ENCODE measurements at regions of chr14 and their contacts with region 1.

Region 1: GRCh38 chr14:94001501-94002396 is 4.6 kb downstream of the CCDC197 start:
- DNase-seq: peak in 4 of 5 donors; percentile 52 to 61 (median 54)
- H3K4me3 ChIP-seq: no peak overlapping the region
- H3K4me3 Mint-ChIP-seq: peak overlapping the region in 5 of 8 donors; percentile 19 to 66 (median 36)
- H3K27ac ChIP-seq: no peak overlapping the region
- H3K27ac Mint-ChIP-seq: peak overlapping the region in 4 of 7 donors; percentile 8 to 61 (median 44)
- H3K4me1 ChIP-seq: peaks cover 8% of the 10 kb centered on the region
- H3K4me1 Mint-ChIP-seq: peaks cover 8 to 18% (median 10%) of the 10 kb centered on the region in 4 donors
- H3K27me3 ChIP-seq: no peaks in the 10 kb centered on the region
- H3K27me3 Mint-ChIP-seq: peaks cover 0 to 2% of the 10 kb centered on the region in 2 donors

Region 2: GRCh38 chr14:93953263-93953662 is 48.5 kb before region 1 on chr14:
- CTCF ChIA-PET with region 1: interaction called, 14 read pairs
- POLR2A ChIA-PET with region 1: interaction called, 5 read pairs
- intact Hi-C with region 1: no loop called
- DNase-seq: no peak
- H3K4me3 ChIP-seq: no peak overlapping the region
- H3K4me3 Mint-ChIP-seq: peak overlapping the region in 7 of 8 donors; percentile 31 to 83 (median 68)
- H3K27ac ChIP-seq: no peak overlapping the region
- H3K27ac Mint-ChIP-seq: peak overlapping the region in 5 of 7 donors; percentile 41 to 100 (median 93)
- H3K4me1 ChIP-seq: peaks cover 65% of the 10 kb centered on the region
- H3K4me1 Mint-ChIP-seq: peaks cover 36 to 67% (median 55%) of the 10 kb centered on the region in 4 donors
- H3K27me3 ChIP-seq: no peaks in the 10 kb centered on the region
- H3K27me3 Mint-ChIP-seq: no peaks in the 10 kb centered on the region

Region 3: GRCh38 chr14:93959239-93960107 is 42.3 kb before region 1 on chr14:
- CTCF ChIA-PET with region 1: interaction called, 9 read pairs
- POLR2A ChIA-PET with region 1: interaction called, 11 read pairs
- intact Hi-C with region 1: no loop called
- DNase-seq: peak; percentile 89 to 99 (median 91)
- H3K4me3 ChIP-seq: peak overlapping the region; percentile 18 to 21
- H3K4me3 Mint-ChIP-seq: peak overlapping the region; percentile 75 to 89 (median 82)
- H3K27ac ChIP-seq: peak overlapping the region; percentile 77
- H3K27ac Mint-ChIP-seq: peak overlapping the region; percentile 96 to 100 (median 99)
- H3K4me1 ChIP-seq: peaks cover 100% of the 10 kb centered on the region
- H3K4me1 Mint-ChIP-seq: peaks cover 80 to 100% (median 93%) of the 10 kb centered on the region in 4 donors
- H3K27me3 ChIP-seq: no peaks in the 10 kb centered on the region
- H3K27me3 Mint-ChIP-seq: no peaks in the 10 kb centered on the region

Region 4: DNA sequence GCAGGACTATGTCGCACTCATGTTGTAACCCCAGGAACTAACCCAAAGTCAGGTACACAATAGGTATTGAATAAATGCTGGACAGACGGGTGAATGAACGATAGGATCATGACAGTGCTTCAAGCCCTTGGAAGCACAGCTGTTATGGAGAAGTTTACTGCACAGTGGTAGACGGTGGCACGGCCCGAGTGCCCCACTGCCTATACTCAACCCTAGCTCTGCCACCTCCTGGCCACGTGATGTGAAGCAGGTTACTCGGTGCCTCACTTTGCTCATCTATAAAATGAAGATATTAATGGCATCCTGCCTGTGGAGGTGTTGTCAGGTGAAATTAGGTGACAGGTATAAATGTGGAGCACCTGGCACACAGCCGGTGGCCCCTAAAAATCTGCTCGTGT is 31.2 kb before region 1 on chr14:
- CTCF ChIA-PET with region 1: interaction called, 114 read pairs
- POLR2A ChIA-PET with region 1: interaction called, 21 read pairs
- intact Hi-C with region 1: loop called (anchors 1 kb)
- DNase-seq: peak; percentile 69 to 78 (median 70)
- H3K4me3 ChIP-seq: peak overlapping the region; percentile 66 to 79
- H3K4me3 Mint-ChIP-seq: peak overlapping the region; percentile 86 to 94 (median 90)
- H3K27ac ChIP-seq: peak overlapping the region; percentile 41
- H3K27ac Mint-ChIP-seq: peak overlapping the region in 6 of 7 donors; percentile 74 to 93 (median 84)
- H3K4me1 ChIP-seq: peaks cover 56% of the 10 kb centered on the region
- H3K4me1 Mint-ChIP-seq: peaks cover 25 to 67% (median 45%) of the 10 kb centered on the region in 4 donors
- H3K27me3 ChIP-seq: no peaks in the 10 kb centered on the region
- H3K27me3 Mint-ChIP-seq: no peaks in the 10 kb centered on the region

Region 5: DNA sequence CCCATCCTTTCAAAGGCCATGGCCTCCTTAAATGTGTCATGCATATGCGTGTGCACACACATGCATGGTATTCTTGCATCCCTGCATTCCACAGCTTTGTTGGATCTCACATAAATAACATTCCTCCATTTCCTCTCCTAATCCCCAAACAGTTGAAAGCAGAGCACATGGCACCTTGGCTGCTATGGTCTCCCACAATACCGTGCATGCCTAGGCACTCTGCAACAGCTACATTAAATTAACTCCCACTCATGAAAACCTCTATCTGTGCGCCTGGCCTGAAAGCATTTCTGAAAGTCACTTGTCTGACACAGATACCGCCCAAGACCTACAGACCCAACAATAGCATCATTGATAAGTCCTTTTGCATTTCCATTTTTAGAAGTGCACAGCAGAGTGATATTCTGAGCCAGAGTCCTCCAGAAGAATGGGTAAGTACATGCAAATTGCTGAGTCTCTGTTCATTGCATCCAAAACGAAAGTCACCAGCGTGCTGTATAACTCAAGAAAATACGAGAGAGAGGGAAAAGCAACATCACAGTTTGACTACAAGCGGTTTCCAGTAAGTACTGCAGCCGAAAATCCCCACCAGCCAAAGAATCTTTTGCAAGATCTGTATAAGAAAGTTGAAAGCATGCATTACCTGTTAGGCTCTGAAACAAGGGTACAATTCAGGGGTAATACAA is 25.8 kb before region 1 on chr14:
- CTCF ChIA-PET with region 1: interaction called, 114 read pairs
- POLR2A ChIA-PET with region 1: interaction called, 21 read pairs
- intact Hi-C with region 1: loop called (anchors 2 kb)
- DNase-seq: peak in 2 of 5 donors; percentile 17 to 40
- H3K4me3 ChIP-seq: peak overlapping the region; percentile 30 to 53
- H3K4me3 Mint-ChIP-seq: peak overlapping the region; percentile 58 to 84 (median 76)
- H3K27ac ChIP-seq: peak overlapping the region; percentile 10
- H3K27ac Mint-ChIP-seq: peak overlapping the region in 6 of 7 donors; percentile 5 to 96 (median 56)
- H3K4me1 ChIP-seq: peaks cover 79% of the 10 kb centered on the region
- H3K4me1 Mint-ChIP-seq: peaks cover 52 to 80% (median 66%) of the 10 kb centered on the region in 4 donors
- H3K27me3 ChIP-seq: no peaks in the 10 kb centered on the region
- H3K27me3 Mint-ChIP-seq: no peaks in the 10 kb centered on the region

Region 6: GRCh38 chr14:93984987-93985410 is 16.8 kb before region 1 on chr14:
- CTCF ChIA-PET with region 1: interaction called, 30 read pairs
- POLR2A ChIA-PET with region 1: no interaction called
- intact Hi-C with region 1: no loop called
- DNase-seq: no peak
- H3K4me3 ChIP-seq: no peak overlapping the region
- H3K4me3 Mint-ChIP-seq: no peak overlapping the region
- H3K27ac ChIP-seq: no peak overlapping the region
- H3K27ac Mint-ChIP-seq: no peak overlapping the region
- H3K4me1 ChIP-seq: peaks cover 11% of the 10 kb centered on the region
- H3K4me1 Mint-ChIP-seq: peaks cover 3 to 14% (median 4%) of the 10 kb centered on the region in 4 donors
- H3K27me3 ChIP-seq: no peaks in the 10 kb centered on the region
- H3K27me3 Mint-ChIP-seq: no peaks in the 10 kb centered on the region

Region 7: DNA sequence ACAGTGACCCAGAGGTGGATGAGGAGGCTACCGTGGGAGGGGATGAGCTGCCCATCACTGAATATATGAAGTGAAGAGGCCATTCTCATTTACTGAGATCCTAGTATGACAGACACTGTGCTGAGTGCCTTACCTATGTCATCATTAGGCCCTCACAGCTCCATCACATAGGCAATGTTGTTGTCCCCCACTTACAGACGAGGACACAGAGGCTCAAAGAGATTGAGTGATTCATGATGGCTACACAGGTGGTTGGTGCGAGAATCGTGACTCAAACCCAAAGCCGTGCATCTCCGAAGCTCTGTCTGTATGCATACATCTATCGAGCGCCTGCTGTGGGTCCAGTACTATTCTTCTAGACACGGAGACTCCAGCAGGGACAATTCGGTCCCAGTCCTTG is 10.5 kb before region 1 on chr14:
- CTCF ChIA-PET with region 1: interaction called, 19 read pairs
- POLR2A ChIA-PET with region 1: interaction called, 3 read pairs
- intact Hi-C with region 1: no loop called
- DNase-seq: no peak
- H3K4me3 ChIP-seq: no peak overlapping the region
- H3K4me3 Mint-ChIP-seq: no peak overlapping the region
- H3K27ac ChIP-seq: no peak overlapping the region
- H3K27ac Mint-ChIP-seq: no peak overlapping the region
- H3K4me1 ChIP-seq: no peaks in the 10 kb centered on the region
- H3K4me1 Mint-ChIP-seq: peaks cover 0 to 2% (median 0%) of the 10 kb centered on the region in 4 donors
- H3K27me3 ChIP-seq: no peaks in the 10 kb centered on the region
- H3K27me3 Mint-ChIP-seq: no peaks in the 10 kb centered on the region